ENCODE measurements at regions of chr22 and their contacts with region 1.

Region 1: GRCh38 chr22:50417411-50418210 is 57.2 kb downstream of the SBF1 start:
- DNase-seq: no peak
- ATAC-seq: no peak
- H3K4me3 ChIP-seq: no peak overlapping the region
- H3K27ac ChIP-seq: no peak overlapping the region
- H3K4me1 ChIP-seq: no peaks in the 10 kb centered on the region
- H3K27me3 ChIP-seq: no peaks in the 10 kb centered on the region
- CTCF ChIP-seq: no peak

Region 2: DNA sequence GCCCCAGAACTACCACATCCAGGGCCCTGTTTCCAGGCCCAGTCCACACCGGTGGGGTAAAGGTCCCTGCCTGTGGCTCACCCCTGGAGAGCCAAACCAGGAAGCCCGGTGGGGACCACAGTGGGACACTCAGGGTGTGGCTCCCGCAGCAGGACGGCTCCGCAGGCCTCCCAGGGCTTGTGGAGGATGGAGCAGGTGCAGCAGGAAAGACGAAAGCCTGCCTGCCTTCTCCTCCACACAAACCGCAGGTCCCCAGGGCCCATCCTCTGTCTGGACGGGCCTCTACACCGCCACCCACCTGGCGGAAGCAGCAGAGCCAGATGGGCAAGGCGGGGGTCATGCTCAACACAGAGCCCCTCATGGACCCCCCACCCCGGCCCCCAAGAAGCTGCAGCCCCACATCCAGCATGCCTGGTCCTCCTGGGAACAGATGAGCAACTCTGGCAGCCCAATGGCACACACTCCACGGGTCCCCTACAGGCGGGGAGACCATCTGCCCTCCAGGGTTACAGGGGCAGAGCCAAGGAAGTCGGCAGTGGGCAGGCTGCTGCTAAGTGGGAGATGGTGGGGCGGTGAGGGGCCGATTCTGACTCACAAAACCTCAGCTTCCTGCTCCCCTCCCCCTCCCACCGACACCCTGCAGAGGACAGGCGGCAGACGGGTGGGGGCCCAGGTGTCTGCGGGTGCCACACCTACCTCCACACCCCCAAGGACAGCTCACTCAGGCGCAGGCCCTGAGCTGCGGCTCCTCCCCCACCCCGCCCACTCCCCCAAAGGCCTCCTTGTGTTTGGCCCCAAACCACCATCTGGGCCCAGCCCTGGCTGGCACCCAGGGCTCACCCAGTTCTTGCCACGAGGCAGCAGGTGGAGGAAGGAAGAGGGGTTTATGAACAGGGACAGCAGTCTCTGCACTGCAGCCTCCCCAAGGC is 52.0 kb after region 1 on chr22:
- intact Hi-C with region 1: loop called in 1 of 3 experiments (anchors 10 kb)
- DNase-seq: peak in 5 of 6 donors; percentile 65 to 84 (median 71)
- ATAC-seq: peak; percentile 11 to 75 (median 52)
- H3K4me3 ChIP-seq: no peak overlapping the region
- H3K27ac ChIP-seq: peak overlapping the region in 1 of 4 donors; percentile 3
- H3K4me1 ChIP-seq: peaks cover 26 to 34% (median 33%) of the 10 kb centered on the region in 3 donors
- H3K27me3 ChIP-seq: no peaks in the 10 kb centered on the region
- CTCF ChIP-seq: no peak